Tibial artery (tissue), 4 donors: ENCODE measurements at regions of chr10 and their contacts with region 1.

Region 1: DNA sequence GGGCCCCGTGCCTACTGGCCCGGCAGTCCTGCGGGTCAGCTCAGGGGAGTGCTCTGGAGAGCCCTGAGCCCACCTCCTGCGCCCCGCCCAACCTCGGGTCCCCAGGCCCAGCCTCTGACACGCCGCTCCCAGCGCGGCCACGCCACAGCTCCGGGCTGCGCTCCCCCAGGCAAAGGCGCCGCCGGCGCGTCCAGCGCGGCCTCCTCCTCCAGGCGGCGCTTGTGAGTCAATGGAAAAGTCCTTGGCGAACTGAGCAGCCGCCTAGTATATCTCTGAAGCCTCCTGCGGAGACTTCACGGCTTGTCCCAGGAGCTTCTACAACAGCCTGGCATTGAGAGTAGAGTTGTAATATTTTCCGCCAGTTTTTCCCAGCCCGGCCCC is 29.5 kb upstream of the BMS1 start:
- DNase-seq: peak; percentile 72 to 84
- H3K4me3 ChIP-seq: peak overlapping the region; percentile 49 to 58
- H3K27ac ChIP-seq: peak overlapping the region in 1 of 2 donors; percentile 35
- H3K4me1 ChIP-seq: peaks cover 0 to 30% (median 26%) of the 10 kb centered on the region in 4 donors
- H3K27me3 ChIP-seq: peaks cover 0 to 58% of the 10 kb centered on the region in 2 donors
- CTCF ChIP-seq: peak; percentile 79 to 93

Region 2: GRCh38 chr10:43093423-43094076 is 340.4 kb after region 1 on chr10:
- intact Hi-C with region 1: loop called (anchors 2 kb)
- DNase-seq: no peak
- H3K4me3 ChIP-seq: no peak overlapping the region
- H3K27ac ChIP-seq: no peak overlapping the region
- H3K4me1 ChIP-seq: no peaks in the 10 kb centered on the region
- H3K27me3 ChIP-seq: peaks cover 0 to 59% of the 10 kb centered on the region in 2 donors
- CTCF ChIP-seq: no peak